ENCODE measurements at regions of chr3 and their contacts with region 1.

Region 1: GRCh38 chr3:190120269-190121060 is at the start of gene P3H2:
- DNase-seq: peak; percentile 93
- H3K4me3 ChIP-seq: peak within 1 kb of the TSS; percentile 60 to 83 (median 62)
- H3K27ac ChIP-seq: peak within 1 kb of the TSS; percentile 51
- H3K4me1 ChIP-seq: peaks cover 9% of the 10 kb centered on the region
- H3K27me3 ChIP-seq: peaks cover 0 to 2% of the 10 kb centered on the region in 2 experiments
- CTCF ChIP-seq: peak; percentile 54 to 70
- POLR2A ChIP-seq: no peak
- total RNA-seq, gene P3H2: 4.8 and 6.6 TPM in 2 replicates

Region 2: GRCh38 chr3:189862390-189863023 is 258.0 kb before region 1 on chr3:
- CTCF ChIA-PET with region 1: no interaction called
- POLR2A ChIA-PET with region 1: no interaction called
- dilution Hi-C with region 1: no loop called
- intact Hi-C with region 1: no loop called
- DNase-seq: no peak
- H3K4me3 ChIP-seq: no peak overlapping the region
- H3K27ac ChIP-seq: no peak overlapping the region
- H3K4me1 ChIP-seq: no peaks in the 10 kb centered on the region
- H3K27me3 ChIP-seq: no peaks in the 10 kb centered on the region
- CTCF ChIP-seq: no peak
- POLR2A ChIP-seq: no peak

Region 3: GRCh38 chr3:189954733-189955132 is 165.7 kb before region 1 on chr3:
- CTCF ChIA-PET with region 1: no interaction called
- POLR2A ChIA-PET with region 1: no interaction called
- dilution Hi-C with region 1: no loop called
- intact Hi-C with region 1: no loop called
- DNase-seq: no peak
- H3K4me3 ChIP-seq: no peak overlapping the region
- H3K27ac ChIP-seq: no peak overlapping the region
- H3K4me1 ChIP-seq: no peaks in the 10 kb centered on the region
- H3K27me3 ChIP-seq: peaks cover 9% of the 10 kb centered on the region in 2 experiments
- CTCF ChIP-seq: no peak
- POLR2A ChIP-seq: no peak

Region 4: GRCh38 chr3:190012314-190012782 is 108.1 kb before region 1 on chr3:
- CTCF ChIA-PET with region 1: interaction called, 17 read pairs
- POLR2A ChIA-PET with region 1: interaction called, 4 read pairs
- dilution Hi-C with region 1: no loop called
- intact Hi-C with region 1: loop called (anchors 1 kb)
- DNase-seq: peak; percentile 40
- H3K4me3 ChIP-seq: no peak overlapping the region
- H3K27ac ChIP-seq: peak overlapping the region; percentile 55
- H3K4me1 ChIP-seq: peaks cover 25% of the 10 kb centered on the region
- H3K27me3 ChIP-seq: no peaks in the 10 kb centered on the region
- CTCF ChIP-seq: no peak
- POLR2A ChIP-seq: no peak

Region 5: GRCh38 chr3:190048932-190049441 is 71.5 kb before region 1 on chr3:
- CTCF ChIA-PET with region 1: interaction called, 10 read pairs
- POLR2A ChIA-PET with region 1: no interaction called
- dilution Hi-C with region 1: no loop called
- intact Hi-C with region 1: loop called (anchors 2 kb)
- DNase-seq: peak; percentile 46
- H3K4me3 ChIP-seq: no peak overlapping the region
- H3K27ac ChIP-seq: no peak overlapping the region
- H3K4me1 ChIP-seq: peaks cover 2% of the 10 kb centered on the region
- H3K27me3 ChIP-seq: no peaks in the 10 kb centered on the region
- CTCF ChIP-seq: no peak
- POLR2A ChIP-seq: no peak

Region 6: GRCh38 chr3:190108804-190109203 is 11.7 kb before region 1 on chr3:
- CTCF ChIA-PET with region 1: interaction called, 12 read pairs
- POLR2A ChIA-PET with region 1: no interaction called
- dilution Hi-C with region 1: no loop called
- intact Hi-C with region 1: no loop called
- DNase-seq: peak; percentile 51
- H3K4me3 ChIP-seq: peak overlapping the region in 1 of 3 experiments; percentile 11
- H3K27ac ChIP-seq: peak overlapping the region; percentile 51
- H3K4me1 ChIP-seq: peaks cover 11% of the 10 kb centered on the region
- H3K27me3 ChIP-seq: no peaks in the 10 kb centered on the region
- CTCF ChIP-seq: no peak
- POLR2A ChIP-seq: no peak

Region 7: DNA sequence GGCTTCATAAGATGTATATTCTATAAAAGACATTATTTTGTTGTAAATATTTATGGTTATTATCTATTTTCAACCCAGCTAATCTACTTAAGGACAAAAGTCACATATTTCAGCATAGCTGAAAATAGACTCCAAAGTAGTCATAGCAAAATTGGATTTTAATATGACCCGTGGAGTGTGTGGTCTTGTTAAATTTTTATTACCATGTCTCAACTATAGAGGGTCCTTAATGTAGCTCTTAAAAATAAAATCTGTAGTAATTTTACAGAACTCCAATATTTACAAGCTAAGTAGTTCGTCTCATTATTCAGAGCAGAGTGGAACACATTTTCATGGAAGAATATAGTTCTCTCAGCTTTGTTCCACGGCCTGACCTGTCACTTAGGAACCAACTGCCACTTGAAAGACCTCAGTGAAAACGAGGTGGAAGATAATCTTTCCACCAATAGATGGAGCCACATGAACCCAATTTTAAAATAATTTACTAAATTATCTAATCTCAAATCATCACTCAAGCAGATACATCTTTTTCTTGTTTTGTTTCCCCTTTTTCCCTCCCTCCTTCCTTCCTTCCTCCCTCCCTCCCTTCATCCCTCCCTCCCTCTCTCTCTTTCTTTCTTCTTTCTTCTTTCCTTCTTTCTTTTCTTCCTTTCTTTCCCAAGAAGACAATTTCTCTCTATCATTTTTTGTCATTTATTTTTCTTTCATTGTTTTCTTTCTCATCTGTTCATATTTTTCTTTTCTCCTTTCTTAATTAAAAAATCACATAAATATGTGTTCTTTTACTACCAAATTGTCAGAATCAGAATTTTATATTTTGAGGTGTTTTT is 104.6 kb after region 1 on chr3:
- CTCF ChIA-PET with region 1: interaction called, 10 read pairs
- POLR2A ChIA-PET with region 1: no interaction called
- dilution Hi-C with region 1: no loop called
- intact Hi-C with region 1: no loop called
- DNase-seq: peak; percentile 58
- H3K4me3 ChIP-seq: no peak overlapping the region
- H3K27ac ChIP-seq: no peak overlapping the region
- H3K4me1 ChIP-seq: peaks cover 10% of the 10 kb centered on the region
- H3K27me3 ChIP-seq: no peaks in the 10 kb centered on the region
- CTCF ChIP-seq: peak; percentile 20 to 24
- POLR2A ChIP-seq: no peak